ENCODE measurements at regions of chr5 and their contacts with region 1.

Region 1: DNA sequence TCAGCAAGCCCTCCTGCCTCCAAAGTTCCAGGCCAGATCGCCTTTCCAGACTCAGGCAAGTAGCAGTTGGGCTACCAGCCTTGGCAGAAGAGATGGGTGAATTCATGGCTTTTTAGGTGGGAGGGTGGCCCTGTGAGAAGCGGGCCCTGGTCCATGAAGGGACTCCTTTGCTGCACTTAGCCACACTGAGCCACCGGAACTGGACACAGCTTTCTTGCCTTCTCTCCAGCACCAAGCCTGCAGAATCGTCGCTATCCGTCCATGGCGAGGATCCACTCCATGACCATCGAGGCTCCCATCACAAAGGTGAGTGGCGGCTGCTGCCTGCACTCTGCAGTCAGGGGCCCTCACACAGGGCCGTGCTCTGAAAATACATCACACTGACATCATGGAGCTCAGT is 85.0 kb downstream of the WDR41 start:
- DNase-seq: no peak
- CTCF ChIP-seq: no peak

Region 2: GRCh38 chr5:77292026-77292757 is 115.0 kb before region 1 on chr5:
- CTCF ChIA-PET with region 1: no interaction called
- POLR2A ChIA-PET with region 1: no interaction called
- DNase-seq: no peak
- CTCF ChIP-seq: no peak

Region 3: GRCh38 chr5:77376609-77377300 is 30.4 kb before region 1 on chr5:
- CTCF ChIA-PET with region 1: no interaction called
- POLR2A ChIA-PET with region 1: no interaction called
- DNase-seq: no peak
- CTCF ChIP-seq: no peak

Region 4: DNA sequence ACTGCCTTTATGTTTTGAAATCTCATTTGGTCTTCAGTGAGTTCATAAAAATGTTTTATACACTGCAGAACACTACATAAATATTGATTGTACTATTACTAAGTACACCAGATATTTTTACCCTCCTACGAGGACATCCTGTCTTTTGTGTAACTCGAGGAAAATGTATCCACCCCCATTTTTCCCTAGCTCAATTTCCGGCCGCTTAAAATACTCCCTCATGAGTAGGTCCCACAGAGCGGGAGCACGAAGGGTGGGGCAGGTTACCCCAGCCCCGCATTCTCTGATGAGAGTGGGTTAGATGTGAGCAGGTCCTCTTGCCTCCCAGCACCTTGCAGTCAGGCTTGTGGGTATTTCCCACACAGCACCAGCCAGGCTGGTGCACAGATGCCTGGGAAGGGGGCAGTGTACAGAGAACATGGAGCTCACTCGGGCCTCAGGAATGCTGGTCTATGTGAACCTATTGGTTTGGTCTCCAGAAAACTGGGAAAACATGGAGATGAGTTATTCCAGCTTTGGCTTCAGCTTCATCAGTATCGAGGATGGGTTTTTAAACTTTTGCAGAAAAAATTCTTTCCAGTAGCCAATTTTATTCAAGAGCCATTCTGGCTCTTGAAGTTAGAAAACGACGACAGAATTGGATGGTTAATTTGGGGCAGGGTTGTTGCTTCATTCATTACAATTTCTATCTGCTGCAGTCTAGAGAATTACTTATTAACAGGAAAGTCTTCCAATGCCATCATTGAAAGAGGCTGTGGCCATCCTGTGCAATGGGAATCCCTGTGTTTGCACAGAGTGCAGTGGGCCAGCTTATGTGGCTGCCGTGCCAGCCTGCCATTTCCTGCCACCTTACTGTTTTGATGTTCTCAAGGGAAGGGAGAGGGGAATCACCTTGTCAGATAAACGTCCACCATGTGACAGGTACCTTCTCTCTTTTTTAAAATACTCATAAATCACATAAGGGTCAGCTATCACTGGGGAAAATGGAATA is 11.7 kb after region 1 on chr5:
- CTCF ChIA-PET with region 1: interaction called, 18 read pairs
- POLR2A ChIA-PET with region 1: no interaction called
- DNase-seq: no peak
- CTCF ChIP-seq: no peak

Region 5: DNA sequence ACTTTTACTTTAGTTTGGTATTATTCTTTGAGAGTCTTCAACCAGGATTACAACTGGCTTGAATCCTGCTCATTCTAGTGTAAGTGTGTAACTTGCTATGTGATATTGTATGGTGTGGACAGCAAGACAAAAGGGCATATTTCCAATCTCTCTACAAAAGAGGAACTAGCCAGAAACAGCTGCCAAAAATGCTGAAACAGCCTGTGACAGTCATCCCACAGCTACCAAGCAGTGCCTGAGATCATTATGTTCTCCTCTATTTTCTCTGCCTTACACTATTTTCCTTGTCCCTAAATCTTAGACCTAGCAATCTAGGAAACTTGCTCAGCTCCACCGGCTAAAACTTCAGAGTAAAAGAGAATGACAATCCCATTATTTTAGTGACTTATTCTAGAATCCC is 42.1 kb after region 1 on chr5:
- CTCF ChIA-PET with region 1: no interaction called
- POLR2A ChIA-PET with region 1: no interaction called
- DNase-seq: no peak
- CTCF ChIP-seq: no peak